MCF 10A (cell line): ENCODE measurements at regions of chr5 and their contacts with region 1.

Region 1: GRCh38 chr5:140420226-140420570 is 18.6 kb downstream of the ANKHD1 start:
- DNase-seq: peak; percentile 43
- H3K4me3 Mint-ChIP-seq: no peak overlapping the region
- H3K27ac Mint-ChIP-seq: no peak overlapping the region
- H3K4me1 Mint-ChIP-seq: peaks cover 39% of the 10 kb centered on the region
- H3K27me3 Mint-ChIP-seq: no peaks in the 10 kb centered on the region
- CTCF ChIP-seq: no peak

Region 2: DNA sequence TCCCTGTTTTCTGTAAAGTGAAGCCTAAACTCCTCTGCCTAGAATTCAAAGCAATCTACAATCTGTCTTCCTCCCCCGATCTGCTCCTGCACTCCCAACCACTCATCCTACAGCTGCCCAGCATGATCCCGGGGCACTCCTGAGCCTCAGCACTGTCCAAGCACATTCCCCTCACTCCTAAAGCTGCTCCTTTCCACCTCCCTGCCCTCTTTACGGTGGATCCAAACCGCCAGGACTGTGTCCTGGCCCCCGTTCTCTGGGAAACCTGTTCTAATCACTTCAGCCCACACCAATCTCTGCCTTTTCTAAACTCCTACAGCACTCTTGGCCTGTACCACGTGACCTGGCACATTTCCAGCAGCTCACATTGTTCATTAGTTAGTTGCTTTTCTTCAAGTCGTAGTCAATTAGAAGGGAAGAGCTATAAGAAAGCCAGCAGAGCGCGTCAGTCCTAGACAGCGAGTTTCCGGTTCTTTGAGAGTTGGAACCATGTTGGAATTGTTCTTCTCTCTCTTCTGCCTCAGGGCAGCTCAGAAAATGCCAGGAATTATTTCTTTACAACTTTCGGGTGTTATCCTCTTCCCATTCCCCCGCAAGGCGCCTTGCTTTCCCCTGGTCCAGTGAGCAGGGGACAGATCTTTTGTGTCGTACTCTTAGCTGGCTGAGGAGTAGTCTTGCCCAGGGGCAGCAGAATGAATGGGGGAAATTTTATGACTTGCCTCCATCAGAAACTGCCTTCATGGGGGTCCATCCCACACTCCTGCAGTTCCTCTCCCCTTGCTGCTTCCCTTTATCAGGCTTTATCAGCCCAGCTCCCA is 437.8 kb before region 1 on chr5:
- CTCF ChIA-PET with region 1: no interaction called
- POLR2A ChIA-PET with region 1: no interaction called
- intact Hi-C with region 1: no loop called
- DNase-seq: peak; percentile 59
- H3K4me3 Mint-ChIP-seq: no peak overlapping the region
- H3K27ac Mint-ChIP-seq: no peak overlapping the region
- H3K4me1 Mint-ChIP-seq: peaks cover 12% of the 10 kb centered on the region
- H3K27me3 Mint-ChIP-seq: peaks cover 36% of the 10 kb centered on the region
- CTCF ChIP-seq: no peak

Region 3: DNA sequence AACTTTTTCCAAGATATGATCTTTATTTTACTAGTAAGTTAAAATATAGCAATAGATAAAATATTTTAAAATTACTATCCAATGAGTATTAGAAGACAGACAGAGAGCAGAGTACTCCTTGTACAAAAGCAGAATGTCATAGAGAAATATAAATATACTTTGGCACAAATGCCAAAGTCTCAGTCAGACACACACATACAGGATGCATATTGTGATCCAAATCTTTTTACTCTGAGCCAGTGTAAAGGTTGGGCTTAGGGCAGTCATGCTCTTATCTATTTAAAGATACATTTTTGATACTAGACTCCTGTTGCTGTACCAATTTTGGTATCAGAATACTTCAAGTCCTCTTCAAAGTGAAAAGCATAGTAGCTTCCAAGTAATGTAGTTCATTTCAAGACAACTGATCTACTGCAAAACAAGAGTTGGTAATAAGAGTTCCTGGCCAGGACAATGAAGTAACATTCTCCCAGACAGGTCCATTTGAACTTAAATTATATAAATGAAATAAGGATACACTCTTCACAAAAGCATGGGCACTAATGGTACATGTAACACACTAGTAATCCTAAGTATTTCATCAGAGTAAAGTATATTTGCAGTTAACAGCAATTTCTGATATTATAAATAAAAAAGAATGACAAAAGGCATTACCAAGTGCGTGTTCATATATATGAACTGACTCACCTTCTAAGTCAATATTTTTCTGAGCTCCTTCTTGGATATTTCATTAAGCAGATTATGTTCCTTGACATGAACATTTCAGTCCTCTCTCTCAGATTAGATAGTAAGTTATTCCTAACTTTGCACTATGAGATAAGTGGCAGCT is 127.8 kb before region 1 on chr5:
- CTCF ChIA-PET with region 1: no interaction called
- POLR2A ChIA-PET with region 1: no interaction called
- intact Hi-C with region 1: no loop called
- DNase-seq: no peak
- H3K4me3 Mint-ChIP-seq: no peak overlapping the region
- H3K27ac Mint-ChIP-seq: no peak overlapping the region
- H3K4me1 Mint-ChIP-seq: peaks cover 50% of the 10 kb centered on the region
- H3K27me3 Mint-ChIP-seq: no peaks in the 10 kb centered on the region
- CTCF ChIP-seq: no peak

Region 4: GRCh38 chr5:140408750-140409256 is 11.4 kb before region 1 on chr5:
- CTCF ChIA-PET with region 1: interaction called, 16 read pairs
- POLR2A ChIA-PET with region 1: interaction called, 6 read pairs
- intact Hi-C with region 1: no loop called
- DNase-seq: peak; percentile 64
- H3K4me3 Mint-ChIP-seq: peak overlapping the region; percentile 40
- H3K27ac Mint-ChIP-seq: peak overlapping the region; percentile 78
- H3K4me1 Mint-ChIP-seq: peaks cover 32% of the 10 kb centered on the region
- H3K27me3 Mint-ChIP-seq: no peaks in the 10 kb centered on the region
- CTCF ChIP-seq: no peak